ENCODE measurements at regions of chr1 and their contacts with region 1.

Region 1: DNA sequence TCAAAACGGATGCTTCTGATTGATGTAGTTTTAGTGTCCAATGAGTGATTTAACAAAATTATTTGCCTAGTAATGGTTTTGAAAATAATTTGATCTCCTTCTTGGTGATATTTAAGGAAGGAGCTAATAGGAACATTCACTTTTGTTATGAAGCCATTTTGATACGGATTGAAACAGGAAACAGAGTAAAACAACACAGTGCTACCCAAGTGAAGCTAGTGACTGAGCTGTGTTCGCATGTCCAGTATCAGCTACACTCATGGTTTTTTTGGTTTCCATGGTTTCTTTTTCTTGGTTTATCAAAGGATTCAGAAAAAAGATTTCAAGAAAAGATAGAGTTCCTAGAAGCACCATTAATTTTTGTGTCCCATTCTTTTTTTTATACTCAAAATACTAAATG is 40.1 kb upstream of the PLEKHO1 start:
- DNase-seq: peak in 4 of 14 experiments; percentile 11 to 74 (median 58)
- ATAC-seq: peak; percentile 57
- H3K4me3 ChIP-seq: peak overlapping the region; percentile 58
- H3K4me3 Mint-ChIP-seq: peak overlapping the region; percentile 88
- H3K27ac ChIP-seq: peak overlapping the region; percentile 59 to 77
- H3K27ac Mint-ChIP-seq: peak overlapping the region; percentile 86
- H3K4me1 ChIP-seq: peaks cover 49% of the 10 kb centered on the region
- H3K4me1 Mint-ChIP-seq: peaks cover 85% of the 10 kb centered on the region
- H3K27me3 ChIP-seq: no peaks in the 10 kb centered on the region
- H3K27me3 Mint-ChIP-seq: no peaks in the 10 kb centered on the region
- CTCF ChIP-seq: no peak

Region 2: GRCh38 chr1:150067184-150068036 is 42.2 kb before region 1 on chr1 and contains the start of gene VPS45:
- CTCF ChIA-PET with region 1: no interaction called
- POLR2A ChIA-PET with region 1: interaction called, 12 read pairs
- intact Hi-C with region 1: no loop called
- DNase-seq: peak; percentile 54 to 89 (median 72)
- ATAC-seq: peak; percentile 91
- H3K4me3 ChIP-seq: peak within 1 kb of the TSS; percentile 79
- H3K4me3 Mint-ChIP-seq: peak within 1 kb of the TSS; percentile 96
- H3K27ac ChIP-seq: peak within 1 kb of the TSS; percentile 31 to 59
- H3K27ac Mint-ChIP-seq: peak within 1 kb of the TSS; percentile 83
- H3K4me1 ChIP-seq: peaks cover 6% of the 10 kb centered on the region
- H3K4me1 Mint-ChIP-seq: peaks cover 44% of the 10 kb centered on the region
- H3K27me3 ChIP-seq: no peaks in the 10 kb centered on the region
- H3K27me3 Mint-ChIP-seq: no peaks in the 10 kb centered on the region
- CTCF ChIP-seq: no peak
- total RNA-seq, gene VPS45: 9.6 to 10.7 TPM

Region 3: GRCh38 chr1:150162862-150163706 is 53.5 kb after region 1 on chr1:
- CTCF ChIA-PET with region 1: interaction called, 3 read pairs
- POLR2A ChIA-PET with region 1: interaction called, 12 read pairs
- intact Hi-C with region 1: no loop called
- DNase-seq: peak in 4 of 14 experiments; percentile 30 to 68 (median 48)
- ATAC-seq: peak; percentile 54
- H3K4me3 ChIP-seq: no peak overlapping the region
- H3K4me3 Mint-ChIP-seq: peak overlapping the region; percentile 8
- H3K27ac ChIP-seq: no peak overlapping the region
- H3K27ac Mint-ChIP-seq: peak overlapping the region; percentile 42
- H3K4me1 ChIP-seq: peaks cover 58% of the 10 kb centered on the region
- H3K4me1 Mint-ChIP-seq: peaks cover 49% of the 10 kb centered on the region
- H3K27me3 ChIP-seq: no peaks in the 10 kb centered on the region
- H3K27me3 Mint-ChIP-seq: no peaks in the 10 kb centered on the region
- CTCF ChIP-seq: no peak

Measured in CD4-positive, alpha-beta T cell (primary cell).